Body of pancreas (tissue), 4 donors: ENCODE measurements at regions of chr12 and their contacts with region 1.

Region 1: GRCh38 chr12:96501139-96501761 is 11.9 kb downstream of the CFAP54 start:
- DNase-seq: peak in 3 of 4 donors; percentile 17 to 31 (median 19)
- ATAC-seq: peak; percentile 60
- H3K4me3 ChIP-seq: no peak overlapping the region
- H3K27ac ChIP-seq: peak overlapping the region in 2 of 4 donors; percentile 6 to 56
- H3K4me1 ChIP-seq: no peaks in the 10 kb centered on the region
- H3K27me3 ChIP-seq: no peaks in the 10 kb centered on the region
- CTCF ChIP-seq: no peak
- POLR2A ChIP-seq: no peak

Region 2: DNA sequence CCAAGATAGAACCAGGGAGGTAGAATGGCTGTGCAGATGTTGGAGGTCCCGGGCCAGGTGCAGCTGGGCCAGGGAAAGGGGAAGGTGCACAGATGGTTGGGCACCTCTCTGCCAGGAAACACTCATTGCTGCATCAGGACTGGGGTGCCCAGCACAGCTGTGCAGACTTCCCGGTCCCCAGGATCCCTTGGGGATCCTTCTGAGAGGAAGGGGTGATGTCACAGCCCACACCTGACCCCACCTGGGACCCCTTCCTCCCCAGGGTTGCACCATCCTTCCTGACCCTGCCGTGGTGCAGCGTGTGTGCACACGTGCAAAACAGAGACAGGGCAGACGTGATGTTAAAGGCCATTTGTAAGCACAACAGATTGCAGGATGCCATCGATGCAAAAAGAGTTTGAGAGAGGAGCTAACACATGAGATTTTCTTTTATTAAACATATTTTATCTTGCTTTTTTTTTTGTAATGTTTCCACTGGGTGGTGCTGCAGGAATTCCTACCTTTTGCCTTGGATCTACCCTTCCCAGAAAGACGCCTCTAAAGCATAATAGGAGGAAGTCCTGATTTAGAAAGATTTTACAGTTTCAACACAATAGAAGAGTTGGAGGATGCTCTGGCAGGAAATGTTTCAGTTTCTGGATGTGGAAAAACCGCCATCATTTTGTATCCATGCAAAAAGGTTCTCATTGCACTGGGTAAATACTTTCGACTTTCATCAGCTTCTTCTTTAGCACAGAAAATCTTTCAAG is 292.3 kb before region 1 on chr12:
- intact Hi-C with region 1: loop called (anchors 10 kb)
- DNase-seq: no peak
- ATAC-seq: peak; percentile 42
- H3K4me3 ChIP-seq: no peak overlapping the region
- H3K27ac ChIP-seq: peak overlapping the region in 1 of 4 donors; percentile 8
- H3K4me1 ChIP-seq: no peaks in the 10 kb centered on the region
- H3K27me3 ChIP-seq: no peaks in the 10 kb centered on the region
- CTCF ChIP-seq: no peak
- POLR2A ChIP-seq: no peak

Region 3: GRCh38 chr12:96658124-96658725 is 157.0 kb after region 1 on chr12:
- intact Hi-C with region 1: no loop called
- DNase-seq: no peak
- ATAC-seq: no peak
- H3K4me3 ChIP-seq: no peak overlapping the region
- H3K27ac ChIP-seq: no peak overlapping the region
- H3K4me1 ChIP-seq: no peaks in the 10 kb centered on the region
- H3K27me3 ChIP-seq: no peaks in the 10 kb centered on the region
- CTCF ChIP-seq: no peak
- POLR2A ChIP-seq: no peak